ENCODE measurements at regions of chr1 and their contacts with region 1.

Region 1: DNA sequence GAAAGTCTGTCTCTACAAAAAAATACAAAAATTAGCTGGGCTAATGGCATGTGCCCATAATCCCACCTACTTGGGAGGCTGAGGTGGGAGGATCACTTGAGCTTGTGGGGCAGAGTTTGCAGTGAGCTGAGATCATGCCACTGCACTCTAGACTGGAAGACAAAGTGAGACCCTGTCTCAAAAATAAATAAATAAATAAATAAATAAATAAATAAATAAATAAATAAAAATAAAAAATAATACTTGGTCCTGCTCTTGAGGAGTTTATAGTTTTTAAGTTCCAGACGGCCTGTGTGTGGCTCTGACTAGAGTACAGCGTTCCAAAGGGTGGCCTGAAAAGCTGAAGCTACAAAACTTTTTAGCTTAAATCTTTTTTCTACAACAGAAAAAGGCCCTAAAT is 35.1 kb downstream of the PCSK9 start:
- DNase-seq: no peak
- H3K4me3 ChIP-seq: no peak overlapping the region
- H3K27ac ChIP-seq: no peak overlapping the region
- H3K4me1 ChIP-seq: no peaks in the 10 kb centered on the region
- H3K27me3 ChIP-seq: no peaks in the 10 kb centered on the region
- CTCF ChIP-seq: no peak
- EP300 ChIP-seq: no peak
- POLR2A ChIP-seq: no peak

Region 2: DNA sequence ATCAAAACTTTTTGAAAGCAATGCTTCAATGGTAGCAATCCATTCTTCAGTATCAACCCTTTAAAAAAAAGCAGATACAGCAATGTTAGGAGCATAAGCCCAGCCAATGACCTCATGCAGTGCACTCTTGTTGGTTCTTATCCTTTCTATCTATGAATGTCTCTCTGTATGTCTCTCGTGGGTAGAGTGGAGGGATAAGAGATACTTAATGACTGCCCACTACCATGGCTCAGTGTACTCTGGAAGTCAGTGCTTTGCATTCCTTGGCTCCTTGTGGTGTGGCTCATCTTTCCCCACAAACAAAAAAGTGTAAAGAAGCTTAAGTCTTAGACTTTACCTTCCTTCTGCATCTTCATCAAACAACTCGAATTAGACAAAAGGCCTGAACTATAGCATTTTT is 15.2 kb after region 1 on chr1:
- intact Hi-C with region 1: loop called (anchors 2 kb)
- DNase-seq: no peak
- H3K4me3 ChIP-seq: no peak overlapping the region
- H3K27ac ChIP-seq: no peak overlapping the region
- H3K4me1 ChIP-seq: no peaks in the 10 kb centered on the region
- H3K27me3 ChIP-seq: no peaks in the 10 kb centered on the region
- CTCF ChIP-seq: no peak
- EP300 ChIP-seq: no peak
- POLR2A ChIP-seq: no peak

Region 3: DNA sequence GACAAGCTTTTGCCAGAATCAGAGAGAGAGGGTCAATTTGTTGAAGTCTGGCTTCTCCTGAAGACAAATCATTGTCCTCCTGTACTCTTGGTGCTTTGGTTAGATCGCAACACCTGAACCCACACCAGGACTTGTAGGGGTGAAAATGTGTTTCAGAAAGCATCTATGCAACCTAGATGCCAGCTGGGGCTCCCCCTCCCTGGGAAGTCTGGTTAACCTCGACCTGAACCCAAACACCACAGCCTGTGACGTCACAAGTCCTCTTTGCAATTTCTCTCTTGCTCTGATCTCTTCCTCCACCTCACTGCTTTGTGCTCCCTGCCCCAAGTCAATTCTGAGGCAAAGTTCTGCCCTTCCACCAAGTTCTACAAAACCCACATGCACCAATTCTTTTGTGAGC is 183.5 kb after region 1 on chr1:
- intact Hi-C with region 1: no loop called
- DNase-seq: peak in 1 of 2 donors; percentile 58
- H3K4me3 ChIP-seq: no peak overlapping the region
- H3K27ac ChIP-seq: no peak overlapping the region
- H3K4me1 ChIP-seq: peaks cover 0 to 4% (median 2%) of the 10 kb centered on the region in 4 donors
- H3K27me3 ChIP-seq: no peaks in the 10 kb centered on the region
- CTCF ChIP-seq: no peak
- EP300 ChIP-seq: no peak
- POLR2A ChIP-seq: no peak

Measured in stomach (tissue), 19 donors.